B cell (primary cell): ENCODE measurements at regions of chr16 and their contacts with region 1.

Region 1: DNA sequence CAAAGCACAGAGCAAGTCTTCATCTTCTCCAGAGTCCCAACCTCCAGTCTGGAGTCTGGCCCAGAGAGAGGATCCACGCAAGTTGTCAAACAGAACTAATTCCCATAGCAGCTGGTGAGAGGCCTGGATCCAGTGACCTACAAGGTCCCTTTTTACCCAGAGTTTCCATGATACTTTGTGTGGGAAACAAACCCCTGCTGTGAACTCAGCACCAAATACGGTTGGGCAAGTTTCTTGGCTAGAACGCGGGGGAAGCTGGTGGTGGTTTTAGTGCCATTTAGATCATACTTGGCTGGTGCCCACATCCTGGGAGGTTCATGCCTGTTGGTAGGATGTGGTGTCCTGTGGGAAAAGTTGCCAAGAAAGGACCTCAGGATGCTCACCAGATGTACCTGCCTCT is 18.1 kb downstream of the TMC7 start:
- DNase-seq: no peak
- ATAC-seq: no peak
- H3K4me3 ChIP-seq: no peak overlapping the region
- H3K4me3 Mint-ChIP-seq: no peak overlapping the region
- H3K27ac ChIP-seq: no peak overlapping the region
- H3K27ac Mint-ChIP-seq: no peak overlapping the region
- H3K4me1 ChIP-seq: no peaks in the 10 kb centered on the region
- H3K4me1 Mint-ChIP-seq: no peaks in the 10 kb centered on the region
- H3K27me3 ChIP-seq: no peaks in the 10 kb centered on the region
- H3K27me3 Mint-ChIP-seq: peaks cover 4% of the 10 kb centered on the region
- CTCF ChIP-seq: no peak

Region 2: GRCh38 chr16:18789850-18790724 is 211.7 kb before region 1 on chr16 and contains the start of gene RPS15A:
- CTCF ChIA-PET with region 1: no interaction called
- POLR2A ChIA-PET with region 1: no interaction called
- intact Hi-C with region 1: no loop called
- DNase-seq: peak; percentile 96
- ATAC-seq: peak; percentile 98
- H3K4me3 ChIP-seq: peak within 1 kb of the TSS; percentile 81 to 99 (median 96)
- H3K4me3 Mint-ChIP-seq: peak within 1 kb of the TSS; percentile 99
- H3K27ac ChIP-seq: peak within 1 kb of the TSS; percentile 77 to 79
- H3K27ac Mint-ChIP-seq: peak within 1 kb of the TSS; percentile 90
- H3K4me1 ChIP-seq: peaks cover 20 to 39% of the 10 kb centered on the region in 2 donors
- H3K4me1 Mint-ChIP-seq: peaks cover 44% of the 10 kb centered on the region
- H3K27me3 ChIP-seq: no peaks in the 10 kb centered on the region
- H3K27me3 Mint-ChIP-seq: no peaks in the 10 kb centered on the region
- CTCF ChIP-seq: no peak
- total RNA-seq, gene RPS15A: 2,146 and 2,321 TPM in 2 replicates

Region 3: GRCh38 chr16:19014461-19014860 is 12.7 kb after region 1 on chr16:
- CTCF ChIA-PET with region 1: no interaction called
- POLR2A ChIA-PET with region 1: no interaction called
- intact Hi-C with region 1: no loop called
- DNase-seq: no peak
- ATAC-seq: no peak
- H3K4me3 ChIP-seq: no peak overlapping the region
- H3K4me3 Mint-ChIP-seq: no peak overlapping the region
- H3K27ac ChIP-seq: no peak overlapping the region
- H3K27ac Mint-ChIP-seq: no peak overlapping the region
- H3K4me1 ChIP-seq: no peaks in the 10 kb centered on the region
- H3K4me1 Mint-ChIP-seq: no peaks in the 10 kb centered on the region
- H3K27me3 ChIP-seq: no peaks in the 10 kb centered on the region
- H3K27me3 Mint-ChIP-seq: peaks cover 6% of the 10 kb centered on the region
- CTCF ChIP-seq: no peak

Region 4: DNA sequence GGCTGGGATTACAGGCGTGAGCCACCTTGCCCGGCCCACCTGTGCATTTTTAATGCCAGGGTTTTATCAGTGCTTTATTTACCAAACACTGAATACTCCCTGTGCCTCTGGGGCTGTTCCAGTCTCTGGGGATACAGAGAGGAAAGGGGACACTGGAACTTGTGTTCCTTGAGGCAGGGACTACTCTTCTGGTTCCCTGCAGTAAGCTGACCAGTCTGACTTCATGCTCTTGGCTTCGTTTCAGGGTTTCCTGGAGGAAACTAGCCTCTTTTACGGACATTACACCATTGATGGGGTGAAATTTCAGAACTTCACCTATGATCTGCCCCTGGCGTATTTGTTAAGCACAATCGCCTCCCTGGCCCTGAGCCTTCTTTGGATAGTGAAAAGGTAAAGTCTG is 28.2 kb after region 1 on chr16:
- CTCF ChIA-PET with region 1: no interaction called
- POLR2A ChIA-PET with region 1: no interaction called
- intact Hi-C with region 1: loop called (anchors 1 kb)
- DNase-seq: no peak
- ATAC-seq: no peak
- H3K4me3 ChIP-seq: no peak overlapping the region
- H3K4me3 Mint-ChIP-seq: no peak overlapping the region
- H3K27ac ChIP-seq: no peak overlapping the region
- H3K27ac Mint-ChIP-seq: no peak overlapping the region
- H3K4me1 ChIP-seq: no peaks in the 10 kb centered on the region
- H3K4me1 Mint-ChIP-seq: no peaks in the 10 kb centered on the region
- H3K27me3 ChIP-seq: peaks cover 0 to 2% (median 0%) of the 10 kb centered on the region in 4 experiments
- H3K27me3 Mint-ChIP-seq: peaks cover 4% of the 10 kb centered on the region
- CTCF ChIP-seq: no peak